ENCODE measurements at regions of chr3 and their contacts with region 1.

Region 1: DNA sequence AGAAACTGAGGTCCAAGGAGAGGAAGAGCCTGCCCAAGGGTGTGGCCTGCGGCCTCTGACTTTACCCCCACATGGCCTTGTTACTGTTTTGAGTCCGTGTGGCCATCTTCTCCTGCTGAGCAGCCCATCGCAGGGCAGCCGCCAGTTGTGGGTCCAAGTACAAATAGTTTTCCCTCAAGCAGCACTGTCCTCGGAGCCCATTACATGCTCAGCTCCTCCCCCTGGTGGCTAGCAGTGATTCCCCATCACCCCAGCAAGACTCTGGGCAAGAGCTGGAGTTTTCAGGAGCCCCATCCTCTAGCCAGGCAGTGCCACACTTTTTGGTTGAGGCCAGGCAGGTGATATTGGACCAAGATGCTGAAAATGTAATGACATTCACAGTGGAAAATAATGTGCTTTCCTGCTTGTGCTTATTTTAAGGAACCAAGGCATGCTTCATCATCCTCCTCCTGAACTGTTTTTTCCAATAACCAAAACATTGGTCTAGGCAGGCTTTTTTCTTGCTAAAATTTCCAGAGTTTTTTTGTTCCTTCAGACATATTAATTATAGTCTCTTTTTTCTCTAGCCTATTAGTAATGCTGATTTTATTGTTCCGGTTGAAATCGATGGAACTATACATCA is 23.2 kb upstream of the VILL start:
- DNase-seq: peak in 1 of 2 donors; percentile 84
- ATAC-seq: peak; percentile 53

Region 2: DNA sequence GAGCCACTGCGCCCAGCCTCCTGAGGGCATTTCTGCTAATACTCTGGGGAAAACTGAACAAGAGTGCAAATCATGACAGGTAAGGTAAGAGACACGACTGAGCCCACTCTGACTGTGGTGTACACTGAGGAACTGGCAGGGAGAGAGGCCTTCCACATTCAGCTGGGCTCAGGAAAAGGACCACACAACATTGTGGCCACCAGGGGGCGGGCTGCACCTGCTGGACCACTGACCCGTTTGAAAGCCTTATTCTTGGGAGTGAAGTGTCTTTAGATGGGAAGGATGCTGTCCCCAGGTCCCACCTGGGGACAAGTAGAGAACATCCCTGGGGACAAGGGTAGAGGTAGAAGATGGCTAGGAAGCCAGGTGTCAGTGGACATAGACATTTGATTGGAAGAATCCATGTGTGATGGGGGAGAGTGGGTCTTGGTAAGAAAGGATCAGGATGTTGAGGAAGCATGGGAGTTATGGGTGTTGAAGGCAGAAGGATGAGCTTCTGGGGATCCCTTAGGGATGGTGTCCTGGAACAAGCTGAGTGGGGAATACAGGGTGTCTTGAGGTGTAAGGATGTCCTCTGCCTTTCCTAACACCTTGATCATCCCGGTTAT is 111.9 kb before region 1 on chr3:
- intact Hi-C with region 1: loop called in 1 of 2 experiments (anchors 2 kb)
- DNase-seq: peak; percentile 62 to 91
- ATAC-seq: peak; percentile 44

Region 3: GRCh38 chr3:37904601-37905000 is 62.8 kb before region 1 on chr3:
- intact Hi-C with region 1: no loop called
- DNase-seq: no peak
- ATAC-seq: no peak

Region 4: DNA sequence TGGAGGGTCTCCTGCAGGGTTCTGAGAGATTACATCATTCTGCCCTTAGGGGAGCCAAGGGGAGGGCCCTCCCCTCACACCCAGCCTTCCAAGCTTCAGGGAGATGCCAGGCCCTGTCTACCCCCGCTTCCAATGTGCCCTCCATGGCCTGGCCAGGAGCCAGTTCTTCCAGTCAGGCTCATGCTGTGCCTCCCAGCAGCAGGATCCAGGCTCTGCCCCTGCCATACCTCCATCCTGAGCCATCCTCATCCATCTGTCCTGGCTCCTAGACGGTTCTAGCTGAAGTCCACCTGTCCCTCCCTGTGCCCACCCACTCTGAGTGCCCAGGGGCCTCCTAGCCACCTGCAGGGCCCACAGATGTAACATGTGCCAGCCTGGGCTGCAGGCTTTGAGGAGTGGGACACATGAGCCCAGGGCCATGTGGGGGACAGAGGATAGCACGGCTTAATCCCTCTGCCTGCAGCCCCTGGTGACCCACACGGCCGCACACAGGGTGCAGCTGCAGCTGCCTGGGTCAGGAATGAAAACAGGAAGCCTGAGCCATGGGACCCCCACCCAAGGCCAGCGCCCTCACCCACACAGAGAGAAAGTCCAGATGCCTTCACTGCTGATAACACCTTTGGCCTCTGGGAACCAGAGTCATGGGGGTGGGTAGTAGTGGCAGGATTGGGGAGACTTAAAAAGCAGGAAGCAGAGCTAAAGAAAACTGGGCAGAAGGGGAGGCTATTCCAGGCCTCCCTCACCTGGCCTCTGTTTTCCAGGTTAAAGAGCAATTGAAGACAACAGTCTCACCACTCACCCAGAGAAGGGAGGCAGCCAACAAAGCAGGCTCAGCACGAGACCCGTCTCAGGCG is 50.3 kb after region 1 on chr3:
- intact Hi-C with region 1: no loop called
- DNase-seq: peak in 1 of 2 donors; percentile 24
- ATAC-seq: no peak